CD4-positive, alpha-beta memory T cell (primary cell): ENCODE measurements at regions of chr9 and their contacts with region 1.

Region 1: DNA sequence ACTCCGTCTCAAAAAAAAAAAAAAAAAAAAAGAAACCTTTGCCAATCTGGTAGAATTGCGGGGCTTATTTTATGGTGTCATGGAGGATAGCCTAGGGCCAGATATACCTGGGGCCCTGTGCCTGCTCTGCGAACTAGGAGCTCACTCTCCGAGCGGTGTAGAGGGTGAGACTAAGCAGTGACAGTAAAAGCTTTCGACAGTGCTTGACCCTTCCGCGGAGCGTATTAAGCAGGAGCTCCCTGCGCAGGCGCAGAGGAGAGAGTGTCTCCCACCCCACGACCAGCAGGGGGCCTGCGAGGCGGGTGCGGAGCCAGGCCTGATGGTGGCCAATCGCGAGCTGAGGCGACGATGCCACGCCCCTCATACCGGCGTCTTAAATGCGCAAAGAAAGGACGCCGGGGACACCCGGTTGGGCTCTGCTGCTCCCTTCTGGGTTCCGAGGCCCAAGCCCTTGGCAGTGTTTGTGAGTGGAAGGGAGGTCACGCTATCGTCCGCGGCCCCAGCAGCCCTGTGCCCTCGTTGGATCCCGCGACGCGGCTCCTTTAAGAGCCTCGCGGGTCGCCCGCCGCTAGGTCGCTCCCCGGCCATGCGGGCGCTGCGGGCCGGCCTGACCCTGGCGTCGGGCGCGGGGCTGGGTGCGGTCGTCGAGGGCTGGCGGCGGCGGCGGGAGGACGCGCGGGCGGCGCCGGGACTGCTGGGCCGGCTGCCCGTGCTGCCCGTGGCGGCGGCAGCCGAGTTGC is at the start of gene ENDOG:
- DNase-seq: peak; percentile 95 to 97 (median 96)
- H3K4me3 ChIP-seq: peak within 1 kb of the TSS; percentile 42 to 69
- H3K4me3 Mint-ChIP-seq: peak within 1 kb of the TSS; percentile 87 to 97 (median 89)
- H3K27ac ChIP-seq: peak within 1 kb of the TSS; percentile 45
- H3K27ac Mint-ChIP-seq: peak within 1 kb of the TSS; percentile 86 to 96 (median 93)
- H3K4me1 ChIP-seq: peaks cover 19% of the 10 kb centered on the region
- H3K4me1 Mint-ChIP-seq: peaks cover 7 to 37% (median 10%) of the 10 kb centered on the region in 4 donors
- H3K27me3 ChIP-seq: no peaks in the 10 kb centered on the region
- H3K27me3 Mint-ChIP-seq: no peaks in the 10 kb centered on the region
- total RNA-seq, gene ENDOG: 18.5 to 19.7 TPM

Region 2: GRCh38 chr9:128643519-128644300 is 174.6 kb before region 1 on chr9:
- CTCF ChIA-PET with region 1: interaction called, 6 read pairs
- POLR2A ChIA-PET with region 1: no interaction called
- intact Hi-C with region 1: loop called (anchors 2 kb)
- DNase-seq: no peak
- H3K4me3 ChIP-seq: no peak overlapping the region
- H3K4me3 Mint-ChIP-seq: no peak overlapping the region
- H3K27ac ChIP-seq: no peak overlapping the region
- H3K27ac Mint-ChIP-seq: peak overlapping the region in 1 of 7 donors; percentile 19
- H3K4me1 ChIP-seq: no peaks in the 10 kb centered on the region
- H3K4me1 Mint-ChIP-seq: peaks cover 0 to 3% (median 0%) of the 10 kb centered on the region in 4 donors
- H3K27me3 ChIP-seq: no peaks in the 10 kb centered on the region
- H3K27me3 Mint-ChIP-seq: no peaks in the 10 kb centered on the region

Region 3: DNA sequence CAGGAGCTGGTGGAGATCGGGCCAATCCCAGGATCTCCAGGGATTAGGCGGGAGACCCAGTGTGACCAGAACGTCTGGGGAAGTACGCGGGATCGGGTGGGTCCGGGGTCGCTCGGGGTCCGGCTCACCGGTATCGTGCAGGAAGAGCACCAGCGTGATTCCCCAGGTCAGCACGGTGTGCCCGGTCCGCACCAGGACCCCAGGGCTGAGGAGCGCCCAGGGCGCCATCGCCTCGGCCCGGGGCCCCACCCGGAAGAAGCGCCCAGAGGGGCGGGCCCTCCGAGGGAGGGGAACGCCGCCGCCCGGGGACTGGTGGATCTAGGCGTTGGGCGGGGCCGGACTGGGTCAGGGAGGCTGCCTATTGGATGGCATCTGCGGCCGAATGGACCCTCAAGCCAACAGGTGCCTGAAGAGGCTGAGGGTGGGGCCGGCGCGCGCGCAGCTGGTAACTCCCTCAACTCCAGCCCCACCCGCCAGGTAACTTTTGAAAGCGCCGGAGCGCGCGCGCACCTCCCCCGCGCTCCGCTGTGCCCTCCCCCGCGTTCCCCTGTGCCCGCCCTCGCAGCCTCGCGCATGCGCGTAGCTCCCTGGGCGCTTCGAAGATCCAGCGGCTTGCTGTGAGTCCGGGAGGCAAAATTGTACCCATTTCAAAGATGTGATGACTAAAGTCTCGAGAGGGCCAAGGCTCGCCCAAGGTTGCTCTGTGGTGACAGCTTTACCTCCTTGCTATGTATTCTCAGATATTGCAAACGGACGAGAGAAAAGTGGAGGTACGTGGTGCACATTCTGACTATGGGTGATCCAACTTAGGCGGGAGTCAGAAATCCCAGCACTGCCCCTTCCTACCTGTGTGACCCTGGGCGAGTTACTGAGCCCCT is 94.2 kb before region 1 on chr9 and contains the start of gene ZDHHC12:
- CTCF ChIA-PET with region 1: interaction called, 3 read pairs
- POLR2A ChIA-PET with region 1: interaction called, 24 read pairs
- intact Hi-C with region 1: loop called (anchors 10 kb)
- DNase-seq: peak; percentile 98 to 99 (median 99)
- H3K4me3 ChIP-seq: peak within 1 kb of the TSS; percentile 89 to 95
- H3K4me3 Mint-ChIP-seq: peak within 1 kb of the TSS; percentile 90 to 94 (median 92)
- H3K27ac ChIP-seq: peak within 1 kb of the TSS; percentile 70
- H3K27ac Mint-ChIP-seq: peak within 1 kb of the TSS; percentile 89 to 97 (median 95)
- H3K4me1 ChIP-seq: peaks cover 28% of the 10 kb centered on the region
- H3K4me1 Mint-ChIP-seq: peaks cover 23 to 45% (median 32%) of the 10 kb centered on the region in 4 donors
- H3K27me3 ChIP-seq: no peaks in the 10 kb centered on the region
- H3K27me3 Mint-ChIP-seq: no peaks in the 10 kb centered on the region
- total RNA-seq, gene ZDHHC12: 24.6 to 25.7 TPM

Region 4: DNA sequence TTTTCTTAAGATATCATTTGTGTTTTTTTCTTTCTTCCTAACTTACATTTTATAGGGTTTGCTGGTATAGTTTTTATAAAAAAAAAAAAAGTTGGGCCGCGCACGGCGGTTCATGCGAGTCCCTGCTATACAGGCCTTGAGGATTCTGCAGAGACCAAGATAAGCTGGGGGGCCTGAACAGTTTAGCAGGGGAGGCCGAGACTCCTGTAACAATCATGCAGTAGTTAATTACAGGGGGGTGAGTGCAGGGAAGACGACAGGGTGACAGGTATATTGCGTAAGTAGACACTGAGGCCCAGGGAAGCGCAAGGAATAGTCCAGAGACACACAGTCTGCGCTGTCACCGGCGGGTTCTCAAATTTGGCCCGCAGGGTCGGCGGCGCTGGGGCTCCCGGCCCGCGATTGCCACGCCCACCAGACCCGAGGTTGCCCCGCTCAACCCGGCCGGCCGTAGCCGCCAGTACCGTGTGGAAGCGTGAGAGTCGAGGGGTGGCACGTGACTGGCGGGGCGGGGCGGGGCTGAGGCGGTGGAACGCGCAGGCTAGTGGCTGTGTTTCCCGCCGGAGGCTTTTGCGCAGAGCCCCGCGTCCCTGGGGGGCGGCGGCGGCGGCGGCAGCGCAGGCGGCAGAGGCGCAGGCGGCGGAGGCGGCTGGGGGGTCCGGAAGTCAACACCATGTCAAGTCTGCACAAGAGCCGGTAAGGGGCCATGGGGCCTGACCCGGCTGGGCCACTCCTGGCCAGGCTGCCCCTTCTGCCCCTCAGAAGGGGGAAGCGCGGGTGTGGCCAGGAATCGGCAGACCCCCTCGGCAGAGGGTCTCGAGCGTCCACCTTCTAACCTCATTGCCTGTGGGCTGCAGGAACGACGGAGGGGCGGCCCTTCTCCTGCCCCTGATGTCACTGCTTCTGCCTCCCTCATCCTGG is 31.3 kb before region 1 on chr9 and contains the start of gene TBC1D13:
- CTCF ChIA-PET with region 1: interaction called, 13 read pairs
- POLR2A ChIA-PET with region 1: interaction called, 9 read pairs
- intact Hi-C with region 1: no loop called
- DNase-seq: peak; percentile 90 to 92 (median 90)
- H3K4me3 ChIP-seq: peak within 1 kb of the TSS; percentile 76 to 80
- H3K4me3 Mint-ChIP-seq: peak within 1 kb of the TSS; percentile 87 to 96 (median 90)
- H3K27ac ChIP-seq: peak within 1 kb of the TSS; percentile 72
- H3K27ac Mint-ChIP-seq: peak within 1 kb of the TSS; percentile 90 to 96 (median 96)
- H3K4me1 ChIP-seq: peaks cover 19% of the 10 kb centered on the region
- H3K4me1 Mint-ChIP-seq: peaks cover 11 to 30% (median 16%) of the 10 kb centered on the region in 4 donors
- H3K27me3 ChIP-seq: no peaks in the 10 kb centered on the region
- H3K27me3 Mint-ChIP-seq: no peaks in the 10 kb centered on the region
- total RNA-seq, gene TBC1D13: 28.0 to 31.4 TPM

Region 5: GRCh38 chr9:128881901-128882681 is 63.8 kb after region 1 on chr9 and contains the starts of genes KYAT1 and LRRC8A:
- CTCF ChIA-PET with region 1: interaction called, 3 read pairs
- POLR2A ChIA-PET with region 1: interaction called, 8 read pairs
- intact Hi-C with region 1: loop called (anchors 2 kb)
- DNase-seq: peak; percentile 96 to 99 (median 97)
- H3K4me3 ChIP-seq: peak within 1 kb of the TSS; percentile 95 to 99
- H3K4me3 Mint-ChIP-seq: peak within 1 kb of the TSS; percentile 94 to 99 (median 98)
- H3K27ac ChIP-seq: peak within 1 kb of the TSS; percentile 84
- H3K27ac Mint-ChIP-seq: peak within 1 kb of the TSS; percentile 92 to 98 (median 98)
- H3K4me1 ChIP-seq: peaks cover 43% of the 10 kb centered on the region
- H3K4me1 Mint-ChIP-seq: peaks cover 34 to 72% (median 56%) of the 10 kb centered on the region in 4 donors
- H3K27me3 ChIP-seq: no peaks in the 10 kb centered on the region
- H3K27me3 Mint-ChIP-seq: no peaks in the 10 kb centered on the region
- total RNA-seq, gene KYAT1: 9.8 to 12.4 TPM
- total RNA-seq, gene LRRC8A: 24.4 to 26.4 TPM

Region 6: DNA sequence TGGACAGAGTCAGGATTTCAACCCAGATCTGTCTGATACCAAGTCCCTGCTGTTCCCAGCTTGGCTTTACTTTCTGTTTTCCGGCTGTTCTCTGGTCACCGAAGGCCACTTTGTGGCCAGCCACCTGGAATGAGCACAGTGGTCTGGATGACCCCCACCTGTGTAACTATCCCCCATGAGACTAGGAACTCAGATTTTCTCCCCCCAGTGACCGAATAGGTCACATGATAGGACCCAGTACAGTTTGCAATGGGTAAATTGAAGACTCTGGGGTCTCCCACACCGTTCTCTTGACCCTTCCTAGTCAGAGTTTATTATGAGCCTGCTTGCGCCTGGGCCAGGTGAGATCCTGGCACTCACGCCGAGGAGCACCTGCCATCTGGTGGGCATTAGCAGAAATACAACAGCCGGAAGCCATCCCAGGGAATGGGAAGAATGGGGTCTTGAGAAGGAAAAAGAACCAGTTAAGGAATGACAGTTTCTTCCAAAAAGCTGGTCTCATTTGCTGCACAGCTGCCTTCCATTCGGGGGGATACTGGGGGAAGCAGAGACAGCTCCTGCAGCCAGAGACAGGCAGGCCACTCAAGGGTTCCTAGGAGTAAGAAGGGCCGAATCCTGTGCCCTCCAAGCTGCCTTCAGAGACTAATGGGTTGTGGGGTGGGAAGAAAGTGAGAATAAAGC is 109.6 kb after region 1 on chr9:
- CTCF ChIA-PET with region 1: interaction called, 13 read pairs
- POLR2A ChIA-PET with region 1: interaction called, 5 read pairs
- intact Hi-C with region 1: no loop called
- DNase-seq: peak in 4 of 5 donors; percentile 44 to 61 (median 49)
- H3K4me3 ChIP-seq: no peak overlapping the region
- H3K4me3 Mint-ChIP-seq: no peak overlapping the region
- H3K27ac ChIP-seq: no peak overlapping the region
- H3K27ac Mint-ChIP-seq: peak overlapping the region in 4 of 7 donors; percentile 5 to 60 (median 20)
- H3K4me1 ChIP-seq: peaks cover 8% of the 10 kb centered on the region
- H3K4me1 Mint-ChIP-seq: peaks cover 4 to 13% (median 11%) of the 10 kb centered on the region in 4 donors
- H3K27me3 ChIP-seq: no peaks in the 10 kb centered on the region
- H3K27me3 Mint-ChIP-seq: no peaks in the 10 kb centered on the region